ENCODE measurements at regions of chr1 and their contacts with region 1.

Region 1: GRCh38 chr1:231065510-231066241 is 25.6 kb upstream of the FAM89A start:
- DNase-seq: peak; percentile 48 to 77 (median 59)
- ATAC-seq: peak; percentile 92
- H3K4me3 ChIP-seq: no peak overlapping the region
- H3K27ac ChIP-seq: peak overlapping the region; percentile 61
- H3K4me1 ChIP-seq: peaks cover 0 to 39% of the 10 kb centered on the region in 2 experiments
- H3K27me3 ChIP-seq: no peaks in the 10 kb centered on the region
- CTCF ChIP-seq: no peak
- EP300 ChIP-seq: peak; percentile 90
- POLR2A ChIP-seq: no peak
- RAD21 ChIP-seq: peak in 1 of 2 experiments; percentile 24; a peak in 1 of 4 replicates

Region 2: GRCh38 chr1:231053493-231054162 is 12.0 kb before region 1 on chr1:
- CTCF ChIA-PET with region 1: no interaction called
- POLR2A ChIA-PET with region 1: interaction called, 9 read pairs
- in situ Hi-C with region 1: no loop called
- intact Hi-C with region 1: loop called (anchors 1 kb)
- DNase-seq: peak in 2 of 4 experiments; percentile 50 to 85
- ATAC-seq: peak; percentile 49
- H3K4me3 ChIP-seq: peak overlapping the region; percentile 6; the same call in 1 of the 2 replicates
- H3K27ac ChIP-seq: peak overlapping the region; percentile 32
- H3K4me1 ChIP-seq: peaks cover 7 to 37% of the 10 kb centered on the region in 2 experiments
- H3K27me3 ChIP-seq: no peaks in the 10 kb centered on the region
- CTCF ChIP-seq: 0 out of 6 replicates have a peak, but pooled peaks of 1 of the 3 experiments have one; percentile 3
- EP300 ChIP-seq: peak; percentile 85
- POLR2A ChIP-seq: no peak
- RAD21 ChIP-seq: peak in 1 of 2 experiments; percentile 37; a peak in 2 of 4 replicates

Region 3: DNA sequence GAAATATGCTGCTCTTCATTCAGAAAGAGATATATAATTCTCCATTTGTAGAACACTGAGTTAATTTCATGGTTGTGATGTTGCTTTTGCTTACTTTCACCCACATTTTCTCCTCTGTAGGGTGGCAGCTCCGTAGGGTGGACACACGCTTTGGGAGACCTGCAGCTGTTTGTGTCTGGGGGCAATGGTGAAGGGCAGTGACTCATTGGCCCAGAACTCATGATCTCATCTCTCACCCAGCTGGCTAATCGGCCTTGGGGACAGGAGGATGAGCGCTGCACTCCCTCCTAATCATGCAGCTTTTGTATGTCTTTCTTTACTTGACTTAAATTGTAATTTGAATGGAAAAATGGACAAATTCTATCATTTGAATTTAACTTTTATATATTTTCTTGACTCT is 570.5 kb after region 1 on chr1:
- CTCF ChIA-PET with region 1: no interaction called
- POLR2A ChIA-PET with region 1: no interaction called
- in situ Hi-C with region 1: no loop called
- intact Hi-C with region 1: no loop called
- DNase-seq: no peak
- ATAC-seq: no peak; the same call in 2 of the 3 replicates
- H3K4me3 ChIP-seq: no peak overlapping the region
- H3K27ac ChIP-seq: no peak overlapping the region
- H3K4me1 ChIP-seq: no peaks in the 10 kb centered on the region
- H3K27me3 ChIP-seq: peaks cover 21 to 22% of the 10 kb centered on the region in 2 experiments; a peak in 4 of 5 replicates
- CTCF ChIP-seq: no peak
- EP300 ChIP-seq: no peak
- POLR2A ChIP-seq: no peak
- RAD21 ChIP-seq: no peak